ENCODE measurements at regions of chr6 and their contacts with region 1.

Region 1: DNA sequence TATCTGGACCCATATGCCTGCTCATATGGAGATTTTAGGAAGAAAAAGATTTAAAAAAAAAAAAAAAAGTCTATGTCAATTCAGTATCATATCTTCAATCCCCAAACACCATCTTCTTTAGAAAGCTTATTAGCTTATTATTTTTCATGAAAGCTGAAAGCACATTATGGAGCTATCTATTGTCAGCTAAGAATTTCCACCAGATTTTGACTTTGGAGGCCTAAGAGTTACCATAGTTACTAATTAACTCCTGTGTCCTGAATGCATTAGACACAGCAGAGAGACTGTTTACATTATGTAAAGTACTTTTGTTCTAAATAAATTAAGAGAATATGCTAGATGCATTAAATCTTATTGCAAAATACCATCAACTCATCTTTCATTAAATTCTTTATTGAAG is 255.5 kb upstream of the NRSN1 start:
- DNase-seq: no peak
- ATAC-seq: no peak

Region 2: GRCh38 chr6:23826572-23826971 is 43.9 kb before region 1 on chr6:
- intact Hi-C with region 1: no loop called
- DNase-seq: no peak
- ATAC-seq: no peak

Region 3: DNA sequence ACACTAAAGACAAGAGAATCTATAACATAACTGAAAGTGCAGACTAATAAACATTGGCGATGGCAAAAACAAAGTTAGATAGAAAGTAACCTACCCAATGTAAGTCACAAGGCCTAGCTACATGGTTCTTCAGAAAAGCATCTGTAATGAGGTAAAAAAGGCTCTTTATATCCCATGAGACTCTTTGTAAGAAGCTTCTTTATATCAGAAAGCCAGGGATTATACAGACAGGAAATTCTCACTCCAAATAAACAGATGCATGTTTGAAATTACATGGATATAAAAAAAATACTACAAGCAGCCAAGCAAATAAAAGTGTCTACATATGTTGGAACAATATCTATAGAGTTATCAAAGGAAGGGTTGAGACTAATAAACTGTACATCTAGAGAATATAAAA is 29.4 kb before region 1 on chr6:
- intact Hi-C with region 1: loop called (anchors 1 kb)
- DNase-seq: no peak
- ATAC-seq: no peak

Region 4: DNA sequence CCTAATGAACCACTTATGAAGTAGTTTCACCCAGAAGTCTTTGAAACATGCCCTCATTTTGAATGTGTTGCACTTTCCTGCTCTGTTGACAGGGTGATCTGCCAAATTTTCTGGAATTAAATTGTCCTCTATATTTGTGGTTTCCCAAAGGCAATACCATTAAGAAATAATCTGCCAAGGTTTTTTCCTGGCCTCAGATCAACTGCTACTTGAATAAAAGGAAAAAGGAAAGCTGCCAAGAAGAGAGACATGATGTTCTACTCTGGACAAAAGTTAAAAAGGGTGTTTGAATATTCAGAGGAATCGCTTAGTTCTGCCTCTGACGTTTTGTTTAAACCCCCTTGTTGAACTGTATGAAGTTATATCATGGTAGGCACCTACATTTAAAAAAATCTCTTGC is 965.6 kb after region 1 on chr6:
- intact Hi-C with region 1: no loop called
- DNase-seq: no peak
- ATAC-seq: peak; percentile 65

Measured in sciatic nerve (tissue), 2 donors.